AG04450 (cell line): ENCODE measurements at regions of chr1 and their contacts with region 1.

Region 1: GRCh38 chr1:237851210-237851845 is 39.4 kb downstream of the ZP4 start:
- DNase-seq: no peak
- H3K4me3 ChIP-seq: no peak overlapping the region
- H3K27ac ChIP-seq: no peak overlapping the region
- H3K27me3 ChIP-seq: no peaks in the 10 kb centered on the region
- CTCF ChIP-seq: peak; percentile 43; the same call in 1 of the 2 replicates

Region 2: DNA sequence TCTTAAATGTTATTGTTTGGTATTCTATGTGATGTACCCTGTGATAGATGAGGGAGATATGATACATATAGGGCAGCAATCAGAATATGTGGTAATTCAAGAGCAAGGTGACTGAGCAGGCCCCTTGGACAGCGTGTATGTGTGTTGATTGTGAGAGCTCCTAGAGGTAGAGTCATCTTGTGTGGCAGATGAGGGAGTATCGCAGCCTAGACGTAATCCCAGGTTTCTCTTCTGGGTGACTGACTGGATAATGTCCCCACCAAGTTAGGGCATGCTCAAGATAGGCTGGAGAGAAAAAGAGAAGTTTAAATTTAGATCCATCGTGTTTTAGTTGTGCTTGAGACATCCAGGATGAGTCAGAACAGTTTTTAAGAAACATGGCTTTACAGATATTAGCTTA is 145.9 kb before region 1 on chr1:
- CTCF ChIA-PET with region 1: no interaction called
- POLR2A ChIA-PET with region 1: no interaction called
- DNase-seq: no peak
- H3K4me3 ChIP-seq: no peak overlapping the region
- H3K27ac ChIP-seq: no peak overlapping the region
- H3K27me3 ChIP-seq: no peaks in the 10 kb centered on the region
- CTCF ChIP-seq: no peak

Region 3: GRCh38 chr1:237864338-237865244 is 13.3 kb after region 1 on chr1:
- CTCF ChIA-PET with region 1: interaction called, 10 read pairs
- POLR2A ChIA-PET with region 1: no interaction called
- DNase-seq: no peak
- H3K4me3 ChIP-seq: no peak overlapping the region
- H3K27ac ChIP-seq: no peak overlapping the region
- H3K27me3 ChIP-seq: no peaks in the 10 kb centered on the region
- CTCF ChIP-seq: peak; percentile 53

Region 4: DNA sequence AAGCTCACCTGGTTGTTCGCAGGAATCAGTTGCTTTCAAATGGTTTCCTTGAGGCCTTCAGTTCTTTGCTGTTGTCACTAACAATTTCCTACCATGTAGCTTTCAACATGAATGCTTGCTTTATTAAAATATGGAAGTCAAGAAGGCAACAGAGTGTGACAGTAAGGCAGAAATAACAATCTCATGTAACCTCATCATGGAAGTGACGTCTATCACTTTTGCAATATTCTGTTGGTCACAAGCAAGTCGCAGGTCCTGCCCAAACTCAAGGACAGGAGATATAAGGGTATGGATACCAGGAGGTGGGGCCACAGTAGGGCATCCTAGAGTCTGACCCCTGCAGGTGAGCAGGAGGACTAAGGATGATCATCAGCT is 336.2 kb after region 1 on chr1:
- CTCF ChIA-PET with region 1: no interaction called
- POLR2A ChIA-PET with region 1: no interaction called
- DNase-seq: no peak
- H3K4me3 ChIP-seq: no peak overlapping the region
- H3K27ac ChIP-seq: no peak overlapping the region
- H3K27me3 ChIP-seq: no peaks in the 10 kb centered on the region
- CTCF ChIP-seq: no peak

Region 5: GRCh38 chr1:238252033-238252802 is 400.9 kb after region 1 on chr1:
- CTCF ChIA-PET with region 1: no interaction called
- POLR2A ChIA-PET with region 1: no interaction called
- DNase-seq: no peak
- H3K4me3 ChIP-seq: no peak overlapping the region
- H3K27ac ChIP-seq: no peak overlapping the region
- H3K27me3 ChIP-seq: no peaks in the 10 kb centered on the region
- CTCF ChIP-seq: peak; percentile 29; the same call in 1 of the 2 replicates

Region 6: DNA sequence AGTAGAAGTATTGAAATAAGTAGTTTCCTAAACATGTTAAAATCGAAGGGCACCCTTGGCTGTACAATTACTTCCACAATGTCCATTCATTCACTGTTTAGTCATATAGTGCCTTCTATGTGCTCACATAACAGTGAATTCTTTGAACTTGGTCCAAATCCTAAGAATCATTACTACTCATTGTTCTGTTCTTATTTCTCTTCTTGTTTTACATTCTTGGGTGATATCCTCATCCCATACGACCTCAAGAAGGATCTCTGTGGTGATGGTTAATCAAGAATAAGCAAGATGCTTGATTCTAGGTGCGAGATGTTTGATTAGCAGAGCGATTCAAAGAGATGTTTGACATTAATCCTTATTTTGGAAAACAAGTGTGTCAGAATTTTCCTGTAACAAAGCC is 706.8 kb after region 1 on chr1:
- CTCF ChIA-PET with region 1: no interaction called
- POLR2A ChIA-PET with region 1: no interaction called
- DNase-seq: no peak
- H3K4me3 ChIP-seq: no peak overlapping the region
- H3K27ac ChIP-seq: no peak overlapping the region
- H3K27me3 ChIP-seq: no peaks in the 10 kb centered on the region
- CTCF ChIP-seq: no peak